RWPE1 (cell line): ENCODE measurements at regions of chr9 and their contacts with region 1.

Region 1: GRCh38 chr9:129626079-129626624 is at the start of gene NTMT1:
- DNase-seq: peak; percentile 94
- H3K27ac ChIP-seq: peak within 1 kb of the TSS; percentile 80
- CTCF ChIP-seq: no peak

Region 2: GRCh38 chr9:129131300-129132145 is 494.6 kb before region 1 on chr9:
- CTCF ChIA-PET with region 1: interaction called, 26 read pairs
- POLR2A ChIA-PET with region 1: interaction called, 3 read pairs
- DNase-seq: peak; percentile 89
- H3K27ac ChIP-seq: peak overlapping the region; percentile 25
- CTCF ChIP-seq: peak; percentile 100

Region 3: GRCh38 chr9:129359916-129360536 is 266.1 kb before region 1 on chr9:
- CTCF ChIA-PET with region 1: interaction called, 10 read pairs
- POLR2A ChIA-PET with region 1: no interaction called
- DNase-seq: no peak
- H3K27ac ChIP-seq: no peak overlapping the region
- CTCF ChIP-seq: no peak

Region 4: DNA sequence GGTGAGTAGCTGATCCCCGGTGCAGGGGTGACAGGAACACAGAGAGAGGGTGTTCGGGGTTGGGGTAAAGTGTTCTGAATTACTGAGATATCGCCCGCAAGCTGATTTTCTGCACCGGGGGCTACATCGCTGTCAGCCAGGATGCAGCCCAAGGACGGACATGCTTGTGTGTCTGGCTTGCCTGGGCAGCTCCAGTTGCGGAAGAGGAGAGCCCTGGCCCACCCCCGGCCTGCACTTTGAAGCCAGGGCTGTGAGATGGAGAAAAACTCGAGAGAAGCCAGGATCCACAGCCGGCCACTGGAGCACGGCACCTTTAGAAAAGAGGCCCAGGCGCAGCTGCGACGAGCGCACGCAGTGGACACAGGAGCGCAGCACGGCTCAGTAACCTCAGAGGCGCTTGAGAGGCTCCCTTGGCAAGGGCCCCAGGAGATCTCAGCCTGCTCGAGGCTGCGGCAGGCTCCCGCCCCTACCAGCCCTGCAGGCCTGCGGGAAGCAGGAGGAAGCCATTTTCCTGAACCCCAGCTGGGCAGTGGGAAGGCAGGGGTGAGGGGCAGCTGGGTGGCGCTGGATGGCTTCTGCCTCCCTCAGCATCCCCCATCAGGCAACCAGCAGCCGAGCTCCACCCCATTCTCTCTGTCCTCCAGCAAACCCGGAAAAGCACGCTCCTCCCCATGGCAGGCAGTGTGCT is 64.4 kb before region 1 on chr9:
- CTCF ChIA-PET with region 1: no interaction called
- POLR2A ChIA-PET with region 1: no interaction called
- DNase-seq: no peak
- H3K27ac ChIP-seq: peak overlapping the region; percentile 8; the same call in 1 of the 2 replicates
- CTCF ChIP-seq: no peak

Region 5: GRCh38 chr9:129610473-129611301 is 15.5 kb before region 1 on chr9:
- CTCF ChIA-PET with region 1: interaction called, 13 read pairs
- POLR2A ChIA-PET with region 1: interaction called, 3 read pairs
- DNase-seq: peak; percentile 88
- H3K27ac ChIP-seq: peak overlapping the region; percentile 83
- CTCF ChIP-seq: peak; percentile 99

Region 6: GRCh38 chr9:129641746-129642513 is 15.8 kb after region 1 on chr9 and contains the start of gene ASB6:
- CTCF ChIA-PET with region 1: interaction called, 33 read pairs
- POLR2A ChIA-PET with region 1: interaction called, 3 read pairs
- DNase-seq: peak; percentile 99
- H3K27ac ChIP-seq: peak within 1 kb of the TSS; percentile 82
- CTCF ChIP-seq: peak; percentile 100

Region 7: GRCh38 chr9:129665389-129665775 is 39.2 kb after region 1 on chr9 and contains the start of gene PRRX2:
- CTCF ChIA-PET with region 1: no interaction called
- POLR2A ChIA-PET with region 1: no interaction called
- DNase-seq: no peak
- H3K27ac ChIP-seq: no peak within 1 kb of the TSS
- CTCF ChIP-seq: no peak